HEK293 (cell line): ENCODE measurements at regions of chr5 and their contacts with region 1.

Region 1: GRCh38 chr5:141223112-141223783 is at the start of gene PCDHB14:
- H3K4me3 ChIP-seq: peak within 1 kb of the TSS; percentile 4
- H3K27ac ChIP-seq: no peak within 1 kb of the TSS
- H3K4me1 ChIP-seq: no peaks in the 10 kb centered on the region; the same call in 1 of the 2 replicates
- CTCF ChIP-seq: no peak

Region 2: DNA sequence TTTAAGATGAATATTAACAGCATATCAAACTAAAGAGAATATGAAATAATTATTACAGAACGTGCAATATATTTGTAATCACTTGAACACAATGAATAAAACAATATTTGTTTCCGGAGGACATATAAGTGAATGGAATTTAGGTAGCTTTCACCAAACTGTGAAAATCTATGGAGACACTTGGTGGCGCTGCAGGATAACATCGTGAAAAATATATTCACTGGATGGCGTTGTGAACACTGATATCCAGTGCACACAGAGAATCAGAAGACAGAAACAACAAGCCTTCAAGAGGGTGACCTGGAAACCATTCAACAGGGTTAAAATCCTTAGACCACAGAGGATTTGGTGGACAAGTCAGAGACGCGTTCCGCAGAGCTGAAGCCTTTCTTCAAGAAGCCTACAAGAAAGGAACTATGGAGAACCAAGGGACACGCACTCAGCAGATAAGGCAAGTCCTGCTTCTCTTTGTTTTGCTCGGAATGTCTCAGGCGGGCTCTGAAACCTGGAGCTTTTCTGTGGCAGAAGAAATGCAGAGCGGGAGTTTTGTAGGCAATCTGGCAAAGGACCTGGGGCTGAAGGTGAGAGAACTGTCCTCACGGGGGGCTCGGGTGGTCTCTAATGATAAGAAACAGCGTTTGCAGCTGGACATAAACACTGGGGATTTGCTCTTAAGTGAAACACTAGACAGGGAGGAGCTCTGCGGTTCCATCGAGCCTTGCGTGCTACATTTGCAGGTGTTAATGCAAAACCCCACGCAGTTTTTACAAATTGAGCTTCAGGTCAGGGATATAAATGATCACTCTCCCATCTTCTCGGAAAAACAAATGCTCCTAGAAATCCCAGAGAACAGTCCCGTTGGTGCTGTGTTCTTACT is 23.7 kb before region 1 on chr5 and contains the start of gene PCDHB11:
- CTCF ChIA-PET with region 1: interaction called, 13 read pairs
- POLR2A ChIA-PET with region 1: no interaction called
- H3K4me3 ChIP-seq: peak within 1 kb of the TSS; percentile 28
- H3K27ac ChIP-seq: no peak within 1 kb of the TSS
- H3K4me1 ChIP-seq: no peaks in the 10 kb centered on the region
- CTCF ChIP-seq: no peak

Region 3: DNA sequence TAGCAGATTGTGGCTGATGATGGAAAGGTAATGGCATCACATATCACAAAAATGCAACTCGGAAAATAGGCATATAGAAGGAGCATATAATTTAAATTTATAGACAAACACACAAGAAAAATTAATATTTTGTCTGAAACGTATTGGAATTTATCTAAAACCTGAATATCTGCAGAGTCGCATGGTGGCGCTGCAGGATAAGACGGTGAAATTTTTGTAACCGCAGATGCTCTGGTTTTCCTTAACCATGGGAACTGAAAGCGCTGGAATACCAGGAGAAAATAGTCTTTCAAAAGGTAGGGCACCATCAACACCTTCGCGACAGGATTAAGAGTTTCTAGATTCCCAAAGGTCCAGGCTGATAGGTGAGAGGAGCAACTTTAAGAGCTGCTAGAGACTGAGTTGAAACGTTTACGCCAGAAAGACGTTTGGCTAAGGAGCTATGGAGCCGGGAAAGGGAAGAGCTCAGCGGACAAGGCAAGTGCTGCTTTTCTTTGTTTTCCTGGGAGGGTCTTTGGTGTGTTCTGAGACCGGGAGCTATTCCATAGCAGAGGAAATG is 10.9 kb after region 1 on chr5:
- CTCF ChIA-PET with region 1: interaction called, 20 read pairs
- POLR2A ChIA-PET with region 1: no interaction called
- H3K4me3 ChIP-seq: peak overlapping the region; percentile 33
- H3K27ac ChIP-seq: no peak overlapping the region
- H3K4me1 ChIP-seq: no peaks in the 10 kb centered on the region
- CTCF ChIP-seq: no peak